GM12878 (cell line): ENCODE measurements at regions of chr3 and their contacts with region 1.

Region 1: DNA sequence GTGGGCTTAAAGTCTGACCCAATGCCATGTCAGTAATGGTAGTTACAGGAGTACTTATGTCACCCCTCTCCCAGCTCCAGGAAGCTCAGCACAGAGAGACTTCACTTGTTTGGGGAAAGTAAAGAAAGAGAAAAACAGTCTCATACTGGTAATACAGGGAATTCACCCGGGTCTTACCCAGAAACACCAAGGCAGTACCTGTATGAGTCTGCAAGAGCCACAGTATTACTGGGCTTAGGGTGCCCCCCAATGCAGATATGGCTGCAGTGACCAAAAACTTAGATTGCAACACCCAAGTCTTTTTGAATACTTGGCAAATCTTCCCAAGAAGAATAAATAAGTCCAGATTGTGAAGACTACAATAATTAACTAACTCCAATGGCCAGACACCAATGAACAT is 622.1 kb downstream of the IGSF11 start:
- DNase-seq: peak; percentile 8
- ATAC-seq: peak; percentile 96
- H3K4me3 ChIP-seq: no peak overlapping the region
- H3K27ac ChIP-seq: 0 out of 2 replicates have a peak overlapping the region, but pooled peaks have one; percentile 6
- H3K4me1 ChIP-seq: no peaks in the 10 kb centered on the region
- H3K27me3 ChIP-seq: no peaks in the 10 kb centered on the region
- CTCF ChIP-seq: peak; percentile 12 to 60 (median 13); a peak in 3 of 6 replicates
- EP300 ChIP-seq: no peak
- POLR2A ChIP-seq: no peak
- RAD21 ChIP-seq: peak; percentile 82

Region 2: GRCh38 chr3:118401887-118402286 is 10.6 kb before region 1 on chr3:
- CTCF ChIA-PET with region 1: interaction called, 12 read pairs
- POLR2A ChIA-PET with region 1: no interaction called
- RAD21 ChIA-PET with region 1: no interaction called
- SMC1A ChIA-PET with region 1: interaction called, 4 read pairs
- in situ Hi-C with region 1: no loop called
- intact Hi-C with region 1: no loop called
- DNase-seq: no peak
- ATAC-seq: no peak
- H3K4me3 ChIP-seq: no peak overlapping the region
- H3K27ac ChIP-seq: no peak overlapping the region
- H3K4me1 ChIP-seq: no peaks in the 10 kb centered on the region
- H3K27me3 ChIP-seq: no peaks in the 10 kb centered on the region
- CTCF ChIP-seq: no peak
- EP300 ChIP-seq: no peak
- POLR2A ChIP-seq: no peak
- RAD21 ChIP-seq: no peak

Region 3: DNA sequence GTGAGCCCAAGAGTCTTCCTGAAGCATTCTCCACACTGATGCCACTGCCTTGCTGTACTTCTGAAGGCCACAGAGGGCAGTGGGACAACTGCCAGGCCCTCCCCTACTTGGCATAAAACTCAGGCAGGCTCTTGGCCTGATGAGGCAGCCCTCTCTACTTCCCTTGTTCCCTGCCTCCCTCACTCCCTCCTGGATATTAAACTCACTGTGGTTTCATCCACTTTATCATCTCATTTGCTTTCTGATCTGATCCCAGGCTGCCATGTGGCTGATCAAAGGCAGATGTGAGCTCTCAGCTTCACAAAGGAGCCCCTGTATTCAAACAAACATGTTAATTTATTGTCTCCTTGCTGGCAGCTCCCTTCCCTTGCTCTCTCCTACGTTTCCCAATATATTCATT is 88.6 kb after region 1 on chr3:
- CTCF ChIA-PET with region 1: no interaction called
- POLR2A ChIA-PET with region 1: no interaction called
- RAD21 ChIA-PET with region 1: no interaction called
- SMC1A ChIA-PET with region 1: no interaction called
- in situ Hi-C with region 1: no loop called
- intact Hi-C with region 1: no loop called
- DNase-seq: no peak
- ATAC-seq: peak; percentile 54
- H3K4me3 ChIP-seq: no peak overlapping the region
- H3K27ac ChIP-seq: no peak overlapping the region
- H3K4me1 ChIP-seq: no peaks in the 10 kb centered on the region
- H3K27me3 ChIP-seq: no peaks in the 10 kb centered on the region
- CTCF ChIP-seq: no peak
- EP300 ChIP-seq: no peak
- POLR2A ChIP-seq: no peak
- RAD21 ChIP-seq: no peak